Right ventricle myocardium superior (tissue), 1 donor: ENCODE measurements at regions of chr17 and their contacts with region 1.

Region 1: GRCh38 chr17:59837308-59838051 is 55.3 kb downstream of the TUBD1 start:
- DNase-seq: no peak
- ATAC-seq: peak; percentile 87

Region 2: GRCh38 chr17:59753522-59754467 is 83.7 kb before region 1 on chr17:
- intact Hi-C with region 1: loop called (anchors 10 kb)
- DNase-seq: no peak
- ATAC-seq: peak; percentile 93